Heart left ventricle (tissue), 16 donors: ENCODE measurements at regions of chr19 and their contacts with region 1.

Region 1: GRCh38 chr19:4576016-4576933 is 16.8 kb upstream of the SEMA6B start:
- DNase-seq: peak; percentile 59 to 86 (median 69)
- ATAC-seq: peak; percentile 21 to 55 (median 46)
- H3K4me3 ChIP-seq: no peak overlapping the region
- H3K27ac ChIP-seq: peak overlapping the region in 11 of 12 donors; percentile 60 to 90 (median 85)
- H3K4me1 ChIP-seq: peaks cover 0 to 31% (median 12%) of the 10 kb centered on the region in 12 donors
- H3K27me3 ChIP-seq: peaks cover 6 to 55% (median 21%) of the 10 kb centered on the region in 9 donors
- CTCF ChIP-seq: peak; percentile 50 to 73 (median 66)
- POLR2A ChIP-seq: no peak

Region 2: DNA sequence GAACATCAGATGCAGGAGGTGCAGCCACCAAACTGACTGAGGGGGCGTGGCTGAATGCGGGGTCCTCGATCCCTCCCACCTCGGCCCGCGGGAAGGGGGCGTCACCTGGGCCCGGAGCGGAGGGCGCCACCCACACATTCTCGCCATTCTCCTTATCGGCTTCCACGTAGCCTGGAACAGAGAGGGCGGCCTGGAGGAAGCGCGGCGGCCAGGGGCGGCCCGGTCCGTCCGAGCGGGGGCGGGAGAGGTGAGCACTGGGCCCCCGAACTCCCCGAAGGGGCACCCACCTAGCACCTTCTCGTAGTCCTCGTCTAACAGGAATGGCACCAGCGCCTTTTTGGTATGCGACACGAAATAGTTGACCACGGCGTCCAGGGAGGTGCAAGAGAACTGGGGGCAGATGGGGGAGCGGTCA is 249.4 kb before region 1 on chr19:
- intact Hi-C with region 1: no loop called
- DNase-seq: no peak
- ATAC-seq: no peak
- H3K4me3 ChIP-seq: peak overlapping the region in 9 of 12 donors; percentile 45 to 62 (median 53)
- H3K27ac ChIP-seq: no peak overlapping the region
- H3K4me1 ChIP-seq: peaks cover 0 to 24% (median 16%) of the 10 kb centered on the region in 12 donors
- H3K27me3 ChIP-seq: peaks cover 0 to 5% (median 0%) of the 10 kb centered on the region in 9 donors
- CTCF ChIP-seq: no peak
- POLR2A ChIP-seq: no peak

Region 3: GRCh38 chr19:4633140-4633967 is 57.1 kb after region 1 on chr19:
- intact Hi-C with region 1: loop called in 9 of 10 experiments (anchors 1 to 5 kb)
- DNase-seq: peak; percentile 56 to 75 (median 71)
- ATAC-seq: peak; percentile 33 to 83 (median 76)
- H3K4me3 ChIP-seq: no peak overlapping the region
- H3K27ac ChIP-seq: peak overlapping the region in 1 of 12 donors; percentile 62
- H3K4me1 ChIP-seq: peaks cover 0 to 47% (median 18%) of the 10 kb centered on the region in 12 donors
- H3K27me3 ChIP-seq: no peaks in the 10 kb centered on the region
- CTCF ChIP-seq: peak; percentile 57 to 84 (median 78)
- POLR2A ChIP-seq: no peak